Activated T-helper 1 cell treated with anti-CD3 and anti-CD28 coated beads, Interleukin-12 subunit alpha, Interleukin-12 subunit beta, Interleukin-2, Interleukin-4 antibody, amounts not matched to agents 30 ng/mL and 10 ng/mL and 1 ng/mL, durations not matched to agents 14 hours and 24 hours and 36 hours (primary cell): ENCODE measurements at regions of chr2 and their contacts with region 1.

Region 1: GRCh38 chr2:202634556-202635427 is at the start of gene FAM117B:
- DNase-seq: peak; percentile 98
- H3K4me3 Mint-ChIP-seq: peak within 1 kb of the TSS; percentile 91
- H3K27ac Mint-ChIP-seq: peak within 1 kb of the TSS; percentile 89
- H3K4me1 Mint-ChIP-seq: peaks cover 45% of the 10 kb centered on the region
- H3K27me3 Mint-ChIP-seq: no peaks in the 10 kb centered on the region
- total RNA-seq, gene FAM117B: 9.3 and 9.5 TPM in 2 replicates

Region 2: DNA sequence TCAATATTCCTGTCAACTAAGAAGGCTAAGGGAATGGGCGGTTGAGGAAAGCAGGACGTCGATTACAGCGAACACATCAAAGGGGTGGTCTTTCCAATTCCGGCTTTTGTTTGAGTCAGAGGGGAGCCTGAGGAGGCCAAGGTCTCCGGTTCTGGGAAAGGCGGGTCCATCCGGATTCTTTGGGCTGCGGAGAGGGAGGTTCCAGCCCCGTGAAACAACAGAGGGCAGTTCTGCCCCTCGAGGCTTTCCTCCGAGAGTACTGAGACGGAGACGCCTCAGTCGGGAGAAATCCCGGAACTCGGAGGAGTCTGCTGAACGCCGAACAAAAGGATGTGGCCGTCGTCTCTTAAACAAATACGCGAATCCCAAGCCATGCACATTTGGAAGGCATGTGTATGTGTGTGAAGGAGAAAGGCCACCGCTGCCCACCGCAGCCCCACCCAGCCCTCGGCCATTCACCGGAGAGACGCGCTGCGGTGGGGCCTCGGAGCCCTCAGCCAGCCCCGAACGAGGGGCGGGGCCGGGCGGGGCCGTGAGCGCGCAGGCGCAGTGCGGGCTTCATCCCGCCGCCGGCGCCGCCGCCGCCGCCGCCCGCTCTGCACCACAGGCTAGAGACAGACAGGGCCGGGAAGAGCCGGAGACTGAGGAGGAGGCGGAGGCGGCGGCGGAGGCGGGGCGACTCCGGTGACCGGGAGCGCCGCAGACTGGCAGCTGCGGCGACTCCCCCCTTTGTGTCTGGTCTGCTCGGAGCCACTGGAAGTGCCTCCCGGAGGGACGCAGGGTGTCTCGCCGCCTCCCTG is 259.0 kb before region 1 on chr2 and contains the start of gene BMPR2:
- intact Hi-C with region 1: loop called (anchors 1 kb)
- DNase-seq: peak; percentile 84
- H3K4me3 Mint-ChIP-seq: peak within 1 kb of the TSS; percentile 99
- H3K27ac Mint-ChIP-seq: peak within 1 kb of the TSS; percentile 83
- H3K4me1 Mint-ChIP-seq: peaks cover 31% of the 10 kb centered on the region
- H3K27me3 Mint-ChIP-seq: no peaks in the 10 kb centered on the region
- total RNA-seq, gene BMPR2: 5.5 and 6.1 TPM in 2 replicates

Region 3: GRCh38 chr2:202700075-202700901 is 65.5 kb after region 1 on chr2:
- intact Hi-C with region 1: loop called (anchors 2 kb)
- DNase-seq: no peak
- H3K4me3 Mint-ChIP-seq: no peak overlapping the region
- H3K27ac Mint-ChIP-seq: peak overlapping the region; percentile 45
- H3K4me1 Mint-ChIP-seq: peaks cover 39% of the 10 kb centered on the region
- H3K27me3 Mint-ChIP-seq: no peaks in the 10 kb centered on the region

Region 4: DNA sequence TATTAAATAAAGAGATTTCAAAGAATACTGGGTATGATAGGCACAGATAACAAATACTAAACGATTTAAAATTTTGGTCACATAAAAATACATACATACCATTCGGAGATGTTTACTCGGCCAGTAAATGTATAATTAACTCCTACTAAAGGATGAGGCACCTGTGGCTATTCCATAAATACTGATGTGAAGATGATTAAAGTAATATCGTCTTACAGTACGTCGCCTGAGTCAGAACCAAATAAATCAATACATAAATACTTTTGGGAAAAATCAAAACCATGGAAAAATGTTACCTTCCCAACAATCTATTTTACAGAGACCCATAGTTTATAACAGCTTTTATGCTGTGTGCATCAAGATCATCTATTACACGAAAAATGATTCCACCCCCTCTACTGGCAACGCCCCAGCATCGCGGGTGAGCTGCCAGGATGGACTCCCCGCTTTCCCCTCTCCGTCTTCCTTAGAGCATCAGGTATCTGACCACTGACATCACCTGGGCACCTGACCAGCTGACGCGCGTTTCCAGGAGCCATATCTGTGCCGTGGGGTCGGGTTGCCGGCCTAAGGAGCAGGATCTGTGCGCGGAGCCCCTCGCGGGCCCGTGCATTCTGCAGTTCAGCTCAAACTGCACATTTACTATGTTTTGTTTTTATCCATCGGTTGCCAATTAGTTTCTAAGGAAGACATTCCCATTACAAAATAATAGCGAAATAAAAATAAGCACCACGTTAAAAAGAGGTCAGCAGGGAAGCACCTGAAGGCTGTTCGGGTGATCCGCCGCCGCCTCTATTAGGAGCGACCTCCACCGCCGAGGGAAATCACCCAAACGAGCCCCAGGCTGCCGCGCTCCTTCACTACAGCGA is 235.9 kb after region 1 on chr2:
- intact Hi-C with region 1: loop called (anchors 2 kb)
- DNase-seq: peak; percentile 32
- H3K4me3 Mint-ChIP-seq: peak overlapping the region; percentile 90
- H3K27ac Mint-ChIP-seq: peak overlapping the region; percentile 76
- H3K4me1 Mint-ChIP-seq: peaks cover 14% of the 10 kb centered on the region
- H3K27me3 Mint-ChIP-seq: peaks cover 8% of the 10 kb centered on the region

Region 5: GRCh38 chr2:203238704-203239526 is 604.1 kb after region 1 on chr2 and contains the start of gene CYP20A1:
- intact Hi-C with region 1: loop called (anchors 1 kb)
- DNase-seq: peak; percentile 97
- H3K4me3 Mint-ChIP-seq: peak within 1 kb of the TSS; percentile 94
- H3K27ac Mint-ChIP-seq: peak within 1 kb of the TSS; percentile 98
- H3K4me1 Mint-ChIP-seq: peaks cover 26% of the 10 kb centered on the region
- H3K27me3 Mint-ChIP-seq: no peaks in the 10 kb centered on the region
- total RNA-seq, gene CYP20A1: 23.1 and 26.0 TPM in 2 replicates